ENCODE measurements at regions of chr10 and their contacts with region 1.

Region 1: GRCh38 chr10:72337020-72337629 is 17.6 kb downstream of the DNAJB12 start:
- DNase-seq: peak; percentile 79
- H3K4me3 Mint-ChIP-seq: no peak overlapping the region
- H3K27ac Mint-ChIP-seq: peak overlapping the region; percentile 99
- H3K4me1 Mint-ChIP-seq: peaks cover 61% of the 10 kb centered on the region
- H3K27me3 Mint-ChIP-seq: no peaks in the 10 kb centered on the region

Region 2: GRCh38 chr10:72126184-72126871 is 210.8 kb before region 1 on chr10:
- CTCF ChIA-PET with region 1: interaction called, 58 read pairs
- POLR2A ChIA-PET with region 1: interaction called, 3 read pairs
- intact Hi-C with region 1: no loop called
- DNase-seq: no peak
- H3K4me3 Mint-ChIP-seq: no peak overlapping the region
- H3K27ac Mint-ChIP-seq: peak overlapping the region; percentile 6
- H3K4me1 Mint-ChIP-seq: peaks cover 34% of the 10 kb centered on the region
- H3K27me3 Mint-ChIP-seq: no peaks in the 10 kb centered on the region

Region 3: DNA sequence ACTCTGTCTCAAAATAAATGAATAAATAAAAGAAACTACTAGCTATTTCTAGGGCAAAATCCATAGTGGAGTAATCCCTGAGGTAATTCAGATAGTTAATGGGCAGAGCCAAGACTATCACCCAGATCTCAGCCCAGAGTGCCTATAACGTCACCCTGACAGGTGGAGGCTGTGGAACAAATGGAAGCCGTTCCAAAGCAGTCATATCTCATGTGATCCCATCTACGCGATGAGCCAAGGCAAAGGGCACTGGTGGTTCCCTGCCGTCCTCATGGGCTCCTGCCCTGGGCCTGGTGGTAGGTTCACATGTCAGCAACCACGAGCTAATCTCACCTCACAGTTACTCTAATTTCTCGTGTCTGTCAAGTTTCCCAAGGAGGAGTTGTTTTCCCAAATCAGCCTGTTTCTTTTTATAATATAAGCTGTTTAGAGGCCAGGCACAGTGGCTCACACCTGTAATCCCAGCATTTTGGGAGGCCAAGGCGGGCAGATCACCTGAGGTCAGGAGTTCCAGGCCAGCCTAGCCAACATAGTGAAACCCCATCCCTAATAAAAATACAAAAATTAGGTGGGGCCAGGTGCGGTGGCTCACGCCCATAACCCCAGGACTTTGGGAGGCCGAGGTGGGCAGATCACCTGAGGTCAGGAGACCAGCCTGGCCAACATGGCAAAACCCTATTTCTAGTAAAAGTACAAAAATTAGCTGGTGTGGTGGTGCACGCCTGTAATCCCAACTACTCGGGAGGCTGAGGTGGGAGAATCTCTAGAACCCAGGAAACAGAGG is 98.5 kb before region 1 on chr10:
- CTCF ChIA-PET with region 1: interaction called, 14 read pairs
- POLR2A ChIA-PET with region 1: interaction called, 4 read pairs
- intact Hi-C with region 1: no loop called
- DNase-seq: no peak
- H3K4me3 Mint-ChIP-seq: no peak overlapping the region
- H3K27ac Mint-ChIP-seq: no peak overlapping the region
- H3K4me1 Mint-ChIP-seq: peaks cover 24% of the 10 kb centered on the region
- H3K27me3 Mint-ChIP-seq: no peaks in the 10 kb centered on the region

Region 4: GRCh38 chr10:72273410-72274212 is 63.5 kb before region 1 on chr10 and contains the start of gene DDIT4:
- CTCF ChIA-PET with region 1: interaction called, 183 read pairs
- POLR2A ChIA-PET with region 1: interaction called, 240 read pairs
- intact Hi-C with region 1: loop called (anchors 1 kb)
- DNase-seq: peak; percentile 99
- H3K4me3 Mint-ChIP-seq: peak within 1 kb of the TSS; percentile 99
- H3K27ac Mint-ChIP-seq: peak within 1 kb of the TSS; percentile 97
- H3K4me1 Mint-ChIP-seq: peaks cover 46% of the 10 kb centered on the region
- H3K27me3 Mint-ChIP-seq: peaks cover 5% of the 10 kb centered on the region
- total RNA-seq, gene DDIT4: 637 TPM

Region 5: GRCh38 chr10:72308320-72308987 is 28.7 kb before region 1 on chr10:
- CTCF ChIA-PET with region 1: interaction called, 12 read pairs
- POLR2A ChIA-PET with region 1: interaction called, 73 read pairs
- intact Hi-C with region 1: no loop called
- DNase-seq: peak; percentile 70
- H3K4me3 Mint-ChIP-seq: no peak overlapping the region
- H3K27ac Mint-ChIP-seq: peak overlapping the region; percentile 85
- H3K4me1 Mint-ChIP-seq: peaks cover 65% of the 10 kb centered on the region
- H3K27me3 Mint-ChIP-seq: no peaks in the 10 kb centered on the region

Region 6: DNA sequence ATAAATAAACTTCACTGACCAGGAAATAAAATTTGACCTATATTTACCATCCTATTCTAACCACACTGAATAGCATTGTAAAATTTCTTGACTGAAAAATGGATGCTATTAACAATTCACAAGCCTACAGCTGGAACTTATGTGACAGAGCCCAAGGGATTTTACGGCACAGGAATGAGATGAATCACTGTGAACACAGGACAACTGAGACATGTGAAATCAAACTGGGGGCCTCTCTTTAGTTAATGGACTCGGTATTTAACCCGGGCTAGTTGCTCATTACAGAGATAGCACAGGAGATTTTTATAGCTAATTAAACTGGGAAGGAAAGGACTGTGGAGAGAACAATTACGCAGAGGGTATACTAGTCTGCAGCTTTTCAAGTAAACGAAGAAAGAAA is 188.2 kb after region 1 on chr10:
- CTCF ChIA-PET with region 1: no interaction called
- POLR2A ChIA-PET with region 1: no interaction called
- intact Hi-C with region 1: no loop called
- DNase-seq: no peak
- H3K4me3 Mint-ChIP-seq: no peak overlapping the region
- H3K27ac Mint-ChIP-seq: no peak overlapping the region
- H3K4me1 Mint-ChIP-seq: no peaks in the 10 kb centered on the region
- H3K27me3 Mint-ChIP-seq: no peaks in the 10 kb centered on the region